ENCODE measurements at regions of chr4 and their contacts with region 1.

Region 1: GRCh38 chr4:98928505-98929340 is at the start of gene EIF4E:
- DNase-seq: peak; percentile 92 to 99
- ATAC-seq: peak; percentile 74 to 92 (median 86)
- H3K4me3 ChIP-seq: peak within 1 kb of the TSS; percentile 99
- H3K4me3 Mint-ChIP-seq: peak within 1 kb of the TSS; percentile 99
- H3K27ac ChIP-seq: peak within 1 kb of the TSS; percentile 95
- H3K27ac Mint-ChIP-seq: peak within 1 kb of the TSS; percentile 93 to 98
- H3K4me1 ChIP-seq: peaks cover 12% of the 10 kb centered on the region
- H3K4me1 Mint-ChIP-seq: peaks cover 20 to 27% of the 10 kb centered on the region in 2 donors
- H3K27me3 ChIP-seq: no peaks in the 10 kb centered on the region
- H3K27me3 Mint-ChIP-seq: no peaks in the 10 kb centered on the region
- CTCF ChIP-seq: no peak
- total RNA-seq, gene EIF4E: 67.4 to 92.4 (median 75.5) TPM

Region 2: DNA sequence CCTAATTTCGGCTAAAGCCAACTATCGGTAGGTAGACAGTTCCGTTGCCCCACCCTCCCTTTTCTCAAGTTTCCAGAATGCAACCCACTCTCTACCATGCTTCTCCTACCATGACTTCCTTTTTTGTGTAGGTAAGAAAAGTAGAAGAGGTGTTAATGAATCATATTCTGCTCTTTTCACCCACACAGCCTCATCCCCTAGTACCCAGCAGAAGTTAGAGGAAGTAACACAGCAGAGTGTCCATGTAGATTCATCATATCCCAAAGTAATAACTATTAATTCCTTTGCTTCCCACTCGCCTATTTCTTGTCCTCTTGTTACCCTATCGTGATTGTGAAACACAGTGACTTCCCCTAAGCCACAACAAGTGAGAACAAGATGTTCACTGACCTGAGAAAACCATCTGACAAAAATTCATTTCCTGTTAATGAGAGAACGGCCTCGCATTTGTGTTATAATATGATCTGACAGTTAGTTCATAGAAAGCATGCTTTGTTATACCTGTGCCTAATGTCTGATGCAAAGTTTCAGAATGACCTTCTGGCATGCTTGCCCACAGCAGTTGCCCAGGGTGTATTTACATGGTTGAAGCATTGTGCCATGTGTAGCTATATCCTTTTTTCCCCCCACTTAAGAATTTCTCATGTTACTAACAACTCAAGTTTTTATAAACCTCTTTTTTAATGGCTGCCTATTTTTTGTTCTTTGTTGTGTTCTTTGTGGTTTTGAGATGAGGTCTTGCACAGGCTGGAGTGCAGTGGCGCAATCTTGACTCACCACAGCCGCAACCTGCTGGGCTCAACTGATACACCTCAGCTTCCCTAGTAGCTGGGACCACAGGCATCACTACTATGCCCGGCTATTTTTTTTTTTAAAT is 482.0 kb before region 1 on chr4:
- intact Hi-C with region 1: loop called (anchors 1 kb)
- DNase-seq: peak; percentile 63 to 80
- ATAC-seq: peak; percentile 79 to 90 (median 88)
- H3K4me3 ChIP-seq: peak overlapping the region; percentile 4
- H3K4me3 Mint-ChIP-seq: peak overlapping the region; percentile 75
- H3K27ac ChIP-seq: peak overlapping the region; percentile 71
- H3K27ac Mint-ChIP-seq: peak overlapping the region; percentile 89 to 91
- H3K4me1 ChIP-seq: peaks cover 42% of the 10 kb centered on the region
- H3K4me1 Mint-ChIP-seq: peaks cover 36 to 51% of the 10 kb centered on the region in 2 donors
- H3K27me3 ChIP-seq: no peaks in the 10 kb centered on the region
- H3K27me3 Mint-ChIP-seq: no peaks in the 10 kb centered on the region
- CTCF ChIP-seq: no peak

Region 3: DNA sequence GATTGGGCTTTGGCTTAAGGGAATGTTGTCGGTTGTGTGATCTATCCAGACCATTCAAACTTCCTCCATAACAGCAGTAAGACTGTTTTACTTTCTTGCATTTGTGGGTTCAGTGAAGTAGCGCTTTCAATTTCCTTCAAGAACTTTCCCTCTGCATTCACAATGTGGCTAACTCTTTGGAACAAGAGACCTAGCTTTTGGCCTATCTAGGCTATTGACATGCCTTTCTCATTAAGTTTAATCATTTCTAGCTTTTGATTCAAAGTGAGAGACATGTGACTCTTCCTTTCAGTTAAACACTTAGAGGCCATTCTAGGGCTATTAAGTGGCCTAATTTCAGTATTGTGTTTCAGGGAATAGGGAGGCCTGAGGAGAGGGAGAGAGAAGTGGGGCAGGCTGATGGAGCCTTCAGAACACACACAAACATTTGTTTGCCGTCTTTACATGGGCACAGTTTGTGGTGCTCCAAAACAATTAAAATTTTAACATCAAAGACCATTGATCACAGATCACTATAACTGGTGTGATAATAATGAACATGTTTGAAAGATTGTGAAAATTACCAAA is 125.8 kb after region 1 on chr4:
- intact Hi-C with region 1: loop called (anchors 5 kb)
- DNase-seq: no peak
- ATAC-seq: no peak
- H3K4me3 ChIP-seq: no peak overlapping the region
- H3K4me3 Mint-ChIP-seq: no peak overlapping the region
- H3K27ac ChIP-seq: no peak overlapping the region
- H3K27ac Mint-ChIP-seq: peak overlapping the region in 1 of 2 donors; percentile 47
- H3K4me1 ChIP-seq: no peaks in the 10 kb centered on the region
- H3K4me1 Mint-ChIP-seq: peaks cover 9 to 18% of the 10 kb centered on the region in 2 donors
- H3K27me3 ChIP-seq: no peaks in the 10 kb centered on the region
- H3K27me3 Mint-ChIP-seq: no peaks in the 10 kb centered on the region
- CTCF ChIP-seq: no peak

Region 4: DNA sequence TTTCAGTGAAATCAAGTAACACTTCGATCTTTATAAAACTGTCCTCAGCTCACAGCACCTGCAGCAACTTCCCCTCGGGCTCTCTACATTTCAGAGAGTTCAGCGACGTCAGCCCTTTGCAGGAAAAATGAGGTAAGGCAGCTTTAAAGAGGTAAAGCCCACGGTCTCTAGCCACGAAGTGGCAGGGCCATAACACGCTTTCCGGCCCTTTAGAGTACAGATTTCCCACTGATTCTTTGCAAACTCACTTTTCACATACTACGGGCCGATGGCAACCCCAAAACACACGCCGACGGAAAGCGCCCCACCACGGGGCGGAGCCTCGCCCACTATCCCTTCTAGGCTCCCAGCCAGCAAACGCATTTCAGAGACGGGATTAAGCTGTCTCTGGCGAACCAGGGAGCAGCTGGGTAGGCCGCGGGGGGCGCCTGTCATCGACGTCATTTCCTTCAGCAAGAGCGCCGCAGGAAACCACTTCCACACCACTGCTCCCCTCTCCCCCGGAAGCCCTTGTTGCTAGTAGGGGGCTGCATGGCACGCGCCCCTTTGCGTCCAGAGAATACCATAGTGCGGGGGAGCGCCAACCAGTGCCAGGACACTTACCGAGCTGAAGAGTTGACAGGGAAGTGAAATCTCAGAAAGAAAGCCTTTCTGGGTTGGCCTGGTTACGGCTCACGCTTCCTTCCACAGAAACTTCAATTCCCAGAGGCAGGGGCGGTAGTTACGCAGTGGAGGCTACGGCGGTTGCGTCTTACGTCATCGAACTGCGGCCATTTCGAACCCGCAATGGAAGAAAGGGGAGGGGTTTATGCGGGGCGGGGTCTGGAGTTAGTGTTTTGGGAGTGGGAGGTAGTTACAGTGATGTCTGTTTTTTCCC is 634.8 kb after region 1 on chr4 and contains the start of gene TRMT10A:
- intact Hi-C with region 1: loop called (anchors 5 kb)
- DNase-seq: peak; percentile 88 to 97
- ATAC-seq: peak; percentile 85 to 94 (median 88)
- H3K4me3 ChIP-seq: peak within 1 kb of the TSS; percentile 73
- H3K4me3 Mint-ChIP-seq: peak within 1 kb of the TSS; percentile 94
- H3K27ac ChIP-seq: peak within 1 kb of the TSS; percentile 94
- H3K27ac Mint-ChIP-seq: peak within 1 kb of the TSS; percentile 99 to 100
- H3K4me1 ChIP-seq: peaks cover 10% of the 10 kb centered on the region
- H3K4me1 Mint-ChIP-seq: peaks cover 6 to 11% of the 10 kb centered on the region in 2 donors
- H3K27me3 ChIP-seq: peaks cover 14% of the 10 kb centered on the region
- H3K27me3 Mint-ChIP-seq: peaks cover 21 to 32% of the 10 kb centered on the region in 2 donors
- CTCF ChIP-seq: no peak
- total RNA-seq, gene TRMT10A: 1.6 to 2.6 (median 2.2) TPM